OCI-LY7 (cell line): ENCODE measurements at regions of chr2 and their contacts with region 1.

Region 1: GRCh38 chr2:38535744-38536506 is 66.8 kb downstream of the HNRNPLL start:
- DNase-seq: peak; percentile 87
- H3K4me3 ChIP-seq: peak overlapping the region; percentile 62
- H3K27ac ChIP-seq: no peak overlapping the region
- H3K4me1 ChIP-seq: peaks cover 43% of the 10 kb centered on the region
- CTCF ChIP-seq: peak; percentile 87

Region 2: GRCh38 chr2:38301340-38301968 is 234.5 kb before region 1 on chr2:
- CTCF ChIA-PET with region 1: no interaction called
- POLR2A ChIA-PET with region 1: no interaction called
- intact Hi-C with region 1: no loop called
- DNase-seq: peak; percentile 81
- H3K4me3 ChIP-seq: peak overlapping the region; percentile 13
- H3K27ac ChIP-seq: peak overlapping the region; percentile 60
- H3K4me1 ChIP-seq: peaks cover 24% of the 10 kb centered on the region
- CTCF ChIP-seq: no peak

Region 3: DNA sequence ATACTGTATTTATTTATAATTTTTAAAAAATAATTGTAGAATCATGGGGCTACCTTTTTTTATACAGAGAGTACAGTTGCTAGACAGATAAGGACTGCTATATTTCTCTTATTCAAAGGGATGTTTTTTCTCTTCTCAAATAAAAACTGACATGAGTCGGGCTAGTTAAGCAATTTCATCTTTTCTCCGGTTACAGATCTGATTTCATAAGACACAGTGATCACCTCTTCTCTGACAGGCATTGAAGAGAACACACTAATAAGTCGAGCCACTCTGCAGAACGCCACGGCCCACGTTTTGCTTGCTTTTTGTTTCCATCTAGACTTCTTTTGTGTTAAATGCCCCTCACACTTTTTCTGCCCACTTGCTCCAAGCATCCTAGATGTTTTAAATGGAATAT is 18.6 kb before region 1 on chr2:
- CTCF ChIA-PET with region 1: interaction called, 6 read pairs
- POLR2A ChIA-PET with region 1: interaction called, 44 read pairs
- intact Hi-C with region 1: no loop called
- DNase-seq: no peak
- H3K4me3 ChIP-seq: no peak overlapping the region
- H3K27ac ChIP-seq: no peak overlapping the region
- H3K4me1 ChIP-seq: peaks cover 19% of the 10 kb centered on the region
- CTCF ChIP-seq: no peak

Region 4: GRCh38 chr2:38572167-38572566 is 36.2 kb after region 1 on chr2:
- CTCF ChIA-PET with region 1: no interaction called
- POLR2A ChIA-PET with region 1: interaction called, 11 read pairs
- intact Hi-C with region 1: no loop called
- DNase-seq: no peak
- H3K4me3 ChIP-seq: no peak overlapping the region
- H3K27ac ChIP-seq: no peak overlapping the region
- H3K4me1 ChIP-seq: no peaks in the 10 kb centered on the region
- CTCF ChIP-seq: no peak

Region 5: DNA sequence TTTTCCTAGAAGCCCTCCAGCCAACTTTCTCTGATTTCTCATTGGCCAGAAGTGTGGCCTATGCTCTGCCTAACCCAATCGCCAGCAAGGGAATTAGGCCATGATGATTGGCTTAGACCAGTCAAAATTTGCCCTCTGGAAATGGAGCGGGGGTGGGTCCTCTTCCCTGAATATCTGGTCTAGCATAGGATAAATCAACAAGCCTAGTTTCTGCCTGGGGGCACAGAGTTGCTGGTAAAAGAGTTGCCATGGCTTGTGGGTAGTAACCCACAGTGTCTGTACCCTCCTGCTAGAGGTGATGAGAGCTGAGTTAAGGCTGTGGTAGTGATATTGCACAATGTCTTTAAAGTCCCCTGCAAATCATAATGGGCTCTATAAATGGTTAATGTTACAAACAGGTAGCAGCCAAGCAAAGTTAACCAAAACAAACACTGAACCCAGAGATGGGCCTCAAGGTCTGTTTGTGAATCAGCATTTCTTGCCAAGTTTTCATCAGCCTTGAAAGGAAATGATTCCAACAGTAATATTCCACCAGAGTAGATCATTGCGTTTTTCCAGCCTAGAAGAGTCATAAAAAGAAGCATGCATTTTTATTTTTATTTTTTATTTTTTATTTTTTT is 149.3 kb after region 1 on chr2:
- CTCF ChIA-PET with region 1: no interaction called
- POLR2A ChIA-PET with region 1: no interaction called
- intact Hi-C with region 1: no loop called
- DNase-seq: no peak
- H3K4me3 ChIP-seq: no peak overlapping the region
- H3K27ac ChIP-seq: no peak overlapping the region
- H3K4me1 ChIP-seq: no peaks in the 10 kb centered on the region
- CTCF ChIP-seq: no peak

Region 6: GRCh38 chr2:38740851-38741731 is 205.2 kb after region 1 on chr2:
- CTCF ChIA-PET with region 1: no interaction called
- POLR2A ChIA-PET with region 1: interaction called, 4 read pairs
- intact Hi-C with region 1: loop called (anchors 5 kb)
- DNase-seq: peak; percentile 55
- H3K4me3 ChIP-seq: no peak overlapping the region
- H3K27ac ChIP-seq: peak overlapping the region; percentile 5
- H3K4me1 ChIP-seq: peaks cover 8% of the 10 kb centered on the region
- CTCF ChIP-seq: peak; percentile 88

Region 7: DNA sequence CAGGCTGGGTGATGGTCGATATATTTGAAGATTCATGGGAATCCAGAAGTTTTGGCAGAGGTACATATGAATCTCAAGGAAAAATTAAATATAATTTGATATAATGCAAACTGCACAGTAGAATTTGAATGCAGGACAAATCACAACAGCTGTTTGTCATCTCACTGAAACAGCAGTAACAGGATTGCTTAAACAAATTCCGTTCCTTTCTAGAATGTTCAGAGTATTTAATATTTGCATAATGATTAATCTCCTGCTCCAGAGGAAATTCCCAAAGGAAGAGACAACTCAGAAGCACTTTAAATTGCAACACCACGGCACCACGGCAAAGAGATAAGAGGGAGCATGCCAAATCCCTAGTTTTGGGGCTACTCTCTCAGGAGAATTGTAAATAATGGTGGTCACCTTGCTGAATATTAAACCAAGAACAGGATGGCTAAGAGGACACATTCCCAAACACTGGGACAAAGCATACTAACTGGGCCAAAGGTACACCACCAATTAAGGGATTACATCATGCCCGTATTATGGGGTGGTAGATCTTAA is 968.9 kb after region 1 on chr2:
- CTCF ChIA-PET with region 1: no interaction called
- POLR2A ChIA-PET with region 1: no interaction called
- intact Hi-C with region 1: no loop called
- DNase-seq: no peak
- H3K4me3 ChIP-seq: no peak overlapping the region
- H3K27ac ChIP-seq: no peak overlapping the region
- H3K4me1 ChIP-seq: peaks cover 20% of the 10 kb centered on the region
- CTCF ChIP-seq: no peak